ENCODE measurements at regions of chr19 and their contacts with region 1.

Region 1: DNA sequence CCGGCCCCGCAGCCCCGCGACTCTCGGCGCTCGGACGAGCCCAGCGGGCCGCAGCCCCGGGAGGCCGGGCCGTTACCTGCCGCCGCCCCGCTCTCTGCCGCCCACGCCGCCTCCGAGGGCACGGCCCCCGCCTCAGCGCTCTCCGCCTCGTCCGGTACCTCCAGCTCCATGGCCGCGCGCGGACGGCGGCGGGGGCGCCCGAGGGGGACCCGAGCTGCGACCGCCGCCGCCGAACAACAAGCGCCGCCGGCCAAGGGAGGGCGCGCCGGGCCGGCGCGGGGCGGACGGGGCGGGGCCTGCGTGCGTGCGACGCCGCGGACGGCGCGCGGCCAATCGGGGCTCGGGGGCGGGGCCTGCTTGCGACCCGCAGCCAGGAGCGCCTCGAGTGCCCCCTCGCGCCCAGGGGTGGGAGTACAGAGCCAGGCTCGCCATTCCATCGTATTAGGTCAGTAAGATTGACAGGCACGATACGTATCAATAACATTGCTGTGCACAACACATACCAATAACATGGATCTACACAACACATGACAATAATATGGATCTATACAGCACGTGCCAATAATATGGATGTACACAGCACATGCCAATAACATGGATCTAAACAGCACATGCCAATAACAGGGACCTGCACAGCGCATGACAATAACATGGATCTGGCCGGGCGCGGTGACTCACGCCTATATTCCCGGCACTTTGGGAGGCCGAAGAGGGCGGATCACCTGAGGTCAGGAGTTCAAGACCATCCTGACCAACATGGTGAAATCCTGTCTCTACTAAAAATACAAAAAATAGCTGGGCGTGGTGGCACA is at the start of gene PIP5K1C:
- DNase-seq: no peak
- H3K4me3 ChIP-seq: peak within 1 kb of the TSS; percentile 91 to 96
- H3K27ac ChIP-seq: peak within 1 kb of the TSS; percentile 95
- H3K4me1 ChIP-seq: peaks cover 36% of the 10 kb centered on the region
- H3K27me3 ChIP-seq: no peaks in the 10 kb centered on the region
- CTCF ChIP-seq: peak; percentile 68 to 75 (median 70)
- POLR2A ChIP-seq: peak in 1 of 2 donors; percentile 76
- total RNA-seq, gene PIP5K1C: 24.1 TPM

Region 2: DNA sequence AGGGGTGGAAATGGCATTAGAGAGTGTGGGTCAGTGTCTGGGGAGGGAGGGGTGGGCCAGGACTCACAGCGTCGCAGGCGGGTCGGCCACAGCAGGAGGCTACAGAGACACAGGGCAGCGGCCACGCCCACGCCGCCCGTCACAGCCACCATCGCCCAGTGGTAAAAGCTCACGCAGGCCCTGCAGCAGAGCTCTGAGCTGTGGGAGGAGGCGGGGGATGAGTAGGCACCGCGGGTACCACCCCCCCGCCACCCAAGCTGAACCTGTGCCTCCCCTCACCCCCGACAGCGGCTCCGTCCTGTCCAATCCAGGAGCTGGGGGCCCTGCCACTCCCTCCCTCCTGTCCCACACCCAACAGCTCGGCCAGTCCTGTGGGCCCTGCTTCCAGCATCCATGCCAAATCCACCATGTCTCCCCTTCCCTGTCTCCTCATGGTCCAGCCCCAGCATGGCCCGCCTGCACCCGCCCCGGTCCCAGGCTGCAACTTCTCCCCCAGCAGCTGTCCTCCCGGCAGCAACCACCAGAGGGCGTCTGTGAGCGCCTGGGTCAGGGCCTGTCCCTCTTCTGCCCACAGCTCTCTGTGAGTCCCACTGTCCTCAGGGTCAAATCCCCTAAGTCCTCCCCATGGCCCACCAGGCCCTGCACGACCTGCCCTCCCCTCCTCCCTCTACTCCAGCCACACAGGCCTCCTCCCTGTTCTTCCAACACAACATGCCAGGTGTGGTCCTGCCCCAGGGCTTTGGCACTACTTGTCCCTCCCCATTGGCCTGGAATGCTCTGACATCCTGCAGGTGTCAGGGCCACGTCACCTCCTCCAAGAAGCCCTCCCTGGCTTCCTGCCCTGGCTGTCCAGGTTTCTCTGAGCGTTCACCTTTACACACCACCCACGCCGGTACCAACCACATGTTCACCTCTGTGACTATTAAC is 155.4 kb before region 1 on chr19:
- intact Hi-C with region 1: loop called (anchors 10 kb)
- DNase-seq: no peak
- H3K4me3 ChIP-seq: no peak overlapping the region
- H3K27ac ChIP-seq: no peak overlapping the region
- H3K4me1 ChIP-seq: no peaks in the 10 kb centered on the region
- H3K27me3 ChIP-seq: no peaks in the 10 kb centered on the region
- CTCF ChIP-seq: peak; percentile 78 to 92 (median 81)
- POLR2A ChIP-seq: no peak

Region 3: DNA sequence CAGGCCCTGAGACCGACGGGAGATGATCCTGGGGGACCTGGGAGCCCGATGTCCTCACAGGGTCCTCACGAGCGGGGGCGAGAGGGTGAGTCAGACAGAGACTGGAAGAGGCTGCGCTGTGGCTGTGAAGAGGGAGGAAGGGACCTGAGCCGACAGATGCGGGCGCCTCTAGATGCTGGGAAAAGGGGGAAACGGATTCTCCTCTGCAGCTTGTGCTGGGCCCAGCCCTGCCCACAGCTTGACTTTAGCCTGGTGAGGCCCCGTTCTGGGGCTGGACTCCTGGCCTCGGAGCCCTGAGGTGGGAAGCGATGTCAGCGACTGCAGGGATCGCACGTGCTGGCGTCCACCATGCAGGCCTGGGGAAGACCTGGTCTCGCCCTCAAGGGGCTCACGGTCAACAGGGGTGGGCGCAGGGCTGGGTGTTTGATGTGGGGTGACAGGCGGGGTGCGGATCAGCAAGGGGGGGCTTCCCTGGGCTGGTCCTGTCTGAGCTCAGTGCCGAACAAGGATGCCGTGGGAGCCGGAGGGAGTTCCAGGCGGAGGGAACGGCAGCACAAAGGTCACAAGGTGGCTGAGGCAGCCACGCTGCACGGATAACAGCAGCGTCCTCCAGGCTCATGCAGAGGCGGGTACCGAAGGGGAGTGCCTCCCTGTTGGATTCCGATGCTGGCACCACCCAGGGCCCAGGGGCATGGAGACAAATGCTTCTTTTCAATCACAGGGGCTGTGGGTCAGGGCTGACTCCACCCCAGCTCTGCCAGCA is 31.9 kb before region 1 on chr19:
- intact Hi-C with region 1: loop called (anchors 1 kb)
- DNase-seq: no peak
- H3K4me3 ChIP-seq: no peak overlapping the region
- H3K27ac ChIP-seq: peak overlapping the region; percentile 99
- H3K4me1 ChIP-seq: peaks cover 61% of the 10 kb centered on the region
- H3K27me3 ChIP-seq: no peaks in the 10 kb centered on the region
- CTCF ChIP-seq: no peak
- POLR2A ChIP-seq: no peak

Region 4: GRCh38 chr19:3830621-3831589 is 130.5 kb after region 1 on chr19:
- intact Hi-C with region 1: no loop called
- DNase-seq: no peak
- H3K4me3 ChIP-seq: no peak overlapping the region
- H3K27ac ChIP-seq: no peak overlapping the region
- H3K4me1 ChIP-seq: no peaks in the 10 kb centered on the region
- H3K27me3 ChIP-seq: no peaks in the 10 kb centered on the region
- CTCF ChIP-seq: no peak
- POLR2A ChIP-seq: no peak

Region 5: GRCh38 chr19:5642204-5642603 is 1941.8 kb after region 1 on chr19:
- intact Hi-C with region 1: no loop called
- DNase-seq: no peak
- H3K4me3 ChIP-seq: no peak overlapping the region
- H3K27ac ChIP-seq: no peak overlapping the region
- H3K4me1 ChIP-seq: peaks cover 21% of the 10 kb centered on the region
- H3K27me3 ChIP-seq: no peaks in the 10 kb centered on the region
- CTCF ChIP-seq: no peak
- POLR2A ChIP-seq: no peak